ENCODE measurements at regions of chr10 and their contacts with region 1.

Region 1: GRCh38 chr10:60618861-60619260 is 159.4 kb upstream of the CDK1 start:
- DNase-seq: no peak
- H3K4me3 ChIP-seq: no peak overlapping the region
- H3K4me3 Mint-ChIP-seq: no peak overlapping the region
- H3K27ac Mint-ChIP-seq: no peak overlapping the region
- H3K4me1 ChIP-seq: peaks cover 8% of the 10 kb centered on the region
- H3K4me1 Mint-ChIP-seq: no peaks in the 10 kb centered on the region
- H3K27me3 ChIP-seq: no peaks in the 10 kb centered on the region
- H3K27me3 Mint-ChIP-seq: no peaks in the 10 kb centered on the region
- CTCF ChIP-seq: peak in 1 of 2 experiments; percentile 24

Region 2: GRCh38 chr10:60513281-60513680 is 105.6 kb before region 1 on chr10:
- CTCF ChIA-PET with region 1: no interaction called
- POLR2A ChIA-PET with region 1: no interaction called
- intact Hi-C with region 1: no loop called
- DNase-seq: no peak
- H3K4me3 ChIP-seq: no peak overlapping the region
- H3K4me3 Mint-ChIP-seq: no peak overlapping the region
- H3K27ac Mint-ChIP-seq: no peak overlapping the region
- H3K4me1 ChIP-seq: no peaks in the 10 kb centered on the region
- H3K4me1 Mint-ChIP-seq: no peaks in the 10 kb centered on the region
- H3K27me3 ChIP-seq: no peaks in the 10 kb centered on the region
- H3K27me3 Mint-ChIP-seq: no peaks in the 10 kb centered on the region
- CTCF ChIP-seq: no peak

Region 3: DNA sequence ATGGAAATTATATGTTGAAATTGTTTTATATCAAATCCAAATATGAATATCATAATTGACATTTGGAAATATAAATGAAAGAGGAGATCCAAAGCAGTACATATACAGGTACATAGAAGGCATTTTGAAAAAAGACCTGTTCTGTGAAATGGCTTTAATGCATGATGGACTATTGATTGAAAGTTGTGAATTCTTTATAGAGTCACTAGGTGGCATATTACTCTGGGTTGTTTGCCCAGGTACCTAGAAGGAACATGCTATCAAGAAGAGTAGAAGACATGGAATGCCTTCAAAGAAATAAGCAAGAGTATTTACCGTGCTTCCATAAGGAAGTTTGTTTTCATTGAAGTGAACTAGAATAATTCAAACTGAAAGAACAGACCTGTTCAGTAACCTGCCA is 69.2 kb before region 1 on chr10:
- CTCF ChIA-PET with region 1: interaction called, 3 read pairs
- POLR2A ChIA-PET with region 1: no interaction called
- intact Hi-C with region 1: loop called (anchors 1 kb)
- DNase-seq: peak in 1 of 2 experiments; percentile 45
- H3K4me3 ChIP-seq: no peak overlapping the region
- H3K4me3 Mint-ChIP-seq: no peak overlapping the region
- H3K27ac Mint-ChIP-seq: no peak overlapping the region
- H3K4me1 ChIP-seq: no peaks in the 10 kb centered on the region
- H3K4me1 Mint-ChIP-seq: no peaks in the 10 kb centered on the region
- H3K27me3 ChIP-seq: no peaks in the 10 kb centered on the region
- H3K27me3 Mint-ChIP-seq: no peaks in the 10 kb centered on the region
- CTCF ChIP-seq: peak; percentile 66 to 76

Region 4: DNA sequence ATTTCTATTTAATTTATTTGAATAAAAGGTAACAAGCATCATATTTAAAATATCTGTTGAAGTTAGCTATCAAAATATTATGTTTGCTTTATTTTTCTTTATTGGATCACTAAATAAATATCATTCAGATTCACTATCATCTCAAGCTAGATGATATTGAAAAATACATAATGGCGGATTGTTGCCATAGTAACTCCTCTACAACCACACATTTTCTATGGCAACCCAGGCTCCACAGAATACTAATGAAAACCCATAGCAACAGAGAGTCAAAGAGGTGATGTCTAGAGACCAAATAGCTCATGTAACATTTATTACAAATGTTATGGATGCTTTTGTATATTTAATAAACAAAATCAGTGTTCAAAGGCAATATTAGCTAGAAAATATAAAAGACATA is 10.5 kb after region 1 on chr10:
- CTCF ChIA-PET with region 1: no interaction called
- POLR2A ChIA-PET with region 1: no interaction called
- intact Hi-C with region 1: no loop called
- DNase-seq: no peak
- H3K4me3 ChIP-seq: no peak overlapping the region
- H3K4me3 Mint-ChIP-seq: peak overlapping the region; percentile 23
- H3K27ac Mint-ChIP-seq: no peak overlapping the region
- H3K4me1 ChIP-seq: peaks cover 45% of the 10 kb centered on the region
- H3K4me1 Mint-ChIP-seq: peaks cover 31% of the 10 kb centered on the region
- H3K27me3 ChIP-seq: no peaks in the 10 kb centered on the region
- H3K27me3 Mint-ChIP-seq: no peaks in the 10 kb centered on the region
- CTCF ChIP-seq: no peak

Region 5: GRCh38 chr10:60834401-60834800 is 215.5 kb after region 1 on chr10:
- CTCF ChIA-PET with region 1: no interaction called
- POLR2A ChIA-PET with region 1: no interaction called
- intact Hi-C with region 1: no loop called
- DNase-seq: no peak
- H3K4me3 ChIP-seq: no peak overlapping the region
- H3K4me3 Mint-ChIP-seq: no peak overlapping the region
- H3K27ac Mint-ChIP-seq: no peak overlapping the region
- H3K4me1 ChIP-seq: no peaks in the 10 kb centered on the region
- H3K4me1 Mint-ChIP-seq: no peaks in the 10 kb centered on the region
- H3K27me3 ChIP-seq: no peaks in the 10 kb centered on the region
- H3K27me3 Mint-ChIP-seq: peaks cover 13% of the 10 kb centered on the region
- CTCF ChIP-seq: no peak

Region 6: DNA sequence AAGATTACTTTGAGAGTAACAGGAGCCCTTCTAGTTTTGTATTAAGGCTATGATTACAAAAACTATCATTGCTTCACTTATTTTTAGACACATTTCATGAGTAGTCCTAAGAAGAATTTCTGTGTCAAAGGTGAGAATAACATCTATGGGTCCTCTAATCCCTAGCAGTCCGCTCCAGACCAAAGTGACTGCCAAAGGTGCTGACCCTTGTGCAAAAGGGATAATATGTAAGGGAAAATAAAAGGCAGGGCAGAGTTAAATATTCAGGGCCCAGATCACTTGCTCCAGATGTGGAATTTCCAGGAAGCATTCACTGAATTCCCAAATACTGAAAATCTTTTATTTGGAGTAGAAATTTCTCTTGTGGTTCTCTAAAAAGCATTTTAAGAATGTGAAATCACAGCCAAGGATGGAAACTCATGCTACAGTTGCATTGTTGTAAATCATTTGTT is 295.9 kb after region 1 on chr10:
- CTCF ChIA-PET with region 1: no interaction called
- POLR2A ChIA-PET with region 1: no interaction called
- intact Hi-C with region 1: no loop called
- DNase-seq: no peak
- H3K4me3 ChIP-seq: no peak overlapping the region
- H3K4me3 Mint-ChIP-seq: no peak overlapping the region
- H3K27ac Mint-ChIP-seq: no peak overlapping the region
- H3K4me1 ChIP-seq: no peaks in the 10 kb centered on the region
- H3K4me1 Mint-ChIP-seq: no peaks in the 10 kb centered on the region
- H3K27me3 ChIP-seq: no peaks in the 10 kb centered on the region
- H3K27me3 Mint-ChIP-seq: no peaks in the 10 kb centered on the region
- CTCF ChIP-seq: no peak